ENCODE measurements at regions of chr19 and their contacts with region 1.

Region 1: GRCh38 chr19:9621156-9622037 is at the start of gene ZNF561:
- DNase-seq: peak; percentile 80
- H3K4me3 Mint-ChIP-seq: peak within 1 kb of the TSS; percentile 100
- H3K27ac Mint-ChIP-seq: peak within 1 kb of the TSS; percentile 99
- H3K4me1 Mint-ChIP-seq: peaks cover 28% of the 10 kb centered on the region
- H3K27me3 Mint-ChIP-seq: no peaks in the 10 kb centered on the region
- total RNA-seq, gene ZNF561: 33.2 and 36.7 TPM in 2 replicates

Region 2: GRCh38 chr19:9205501-9206113 is 415.8 kb before region 1 on chr19:
- intact Hi-C with region 1: loop called (anchors 10 kb)
- DNase-seq: peak; percentile 52
- H3K4me3 Mint-ChIP-seq: peak overlapping the region; percentile 37
- H3K27ac Mint-ChIP-seq: no peak overlapping the region
- H3K4me1 Mint-ChIP-seq: peaks cover 6% of the 10 kb centered on the region
- H3K27me3 Mint-ChIP-seq: no peaks in the 10 kb centered on the region

Region 3: GRCh38 chr19:9538183-9539058 is 83.0 kb before region 1 on chr19 and contains the start of gene ZNF426:
- intact Hi-C with region 1: loop called (anchors 5 kb)
- DNase-seq: peak; percentile 76
- H3K4me3 Mint-ChIP-seq: peak within 1 kb of the TSS; percentile 97
- H3K27ac Mint-ChIP-seq: peak within 1 kb of the TSS; percentile 98
- H3K4me1 Mint-ChIP-seq: peaks cover 5% of the 10 kb centered on the region
- H3K27me3 Mint-ChIP-seq: no peaks in the 10 kb centered on the region
- total RNA-seq, gene ZNF426: 10.2 and 10.3 TPM in 2 replicates

Region 4: GRCh38 chr19:9674663-9675357 is 53.4 kb after region 1 on chr19 and contains the start of gene ZNF562:
- intact Hi-C with region 1: loop called (anchors 2 kb)
- DNase-seq: peak; percentile 63
- H3K4me3 Mint-ChIP-seq: peak within 1 kb of the TSS; percentile 89
- H3K27ac Mint-ChIP-seq: peak within 1 kb of the TSS; percentile 95
- H3K4me1 Mint-ChIP-seq: peaks cover 21% of the 10 kb centered on the region
- H3K27me3 Mint-ChIP-seq: no peaks in the 10 kb centered on the region
- total RNA-seq, gene ZNF562: 13.2 and 13.8 TPM in 2 replicates

Region 5: DNA sequence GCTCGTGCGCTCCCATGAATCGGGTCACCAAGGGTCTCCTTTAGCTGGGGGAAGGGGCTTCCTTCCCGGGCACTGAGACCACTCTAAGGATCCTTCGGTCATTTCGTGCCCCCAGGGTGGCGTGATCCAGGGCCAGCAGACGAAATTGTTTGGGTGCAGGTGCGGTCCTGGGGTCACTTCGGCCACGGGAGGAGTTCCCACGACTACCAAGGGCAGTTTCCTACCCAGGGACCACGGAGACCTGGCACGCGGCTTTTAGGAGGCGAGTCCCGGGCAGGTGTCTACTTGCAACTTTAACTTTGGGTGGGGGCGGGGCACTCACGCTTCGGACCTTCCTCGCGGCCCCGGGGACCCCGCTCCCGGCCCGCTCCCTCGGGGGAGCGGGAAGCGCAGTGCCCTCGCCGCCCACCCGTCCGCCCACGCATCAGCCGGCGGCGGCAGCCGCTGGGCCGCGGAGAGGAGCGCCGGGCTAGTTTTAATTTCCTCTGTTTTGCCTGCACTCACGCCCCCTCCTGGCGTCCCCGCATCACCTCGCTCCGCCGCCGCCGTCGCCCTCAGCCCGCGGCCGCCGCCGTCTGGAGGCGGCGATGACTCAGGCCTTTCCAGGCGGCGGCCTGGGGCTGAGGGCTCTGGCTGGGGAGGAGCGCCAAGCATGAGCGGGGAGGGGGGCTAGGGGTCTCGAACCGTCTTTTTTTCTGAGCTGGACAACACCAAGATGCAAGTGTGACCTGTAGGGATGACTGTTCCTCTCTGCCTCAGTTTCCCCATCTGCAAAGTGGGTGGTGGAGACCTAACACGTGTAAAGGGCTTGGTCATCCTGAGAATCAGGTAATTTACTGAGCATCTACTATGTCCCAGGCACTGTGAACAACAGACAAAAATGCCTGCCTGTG is 293.2 kb after region 1 on chr19:
- intact Hi-C with region 1: loop called (anchors 10 kb)
- DNase-seq: peak; percentile 69
- H3K4me3 Mint-ChIP-seq: peak overlapping the region; percentile 52
- H3K27ac Mint-ChIP-seq: no peak overlapping the region
- H3K4me1 Mint-ChIP-seq: peaks cover 17% of the 10 kb centered on the region
- H3K27me3 Mint-ChIP-seq: peaks cover 21% of the 10 kb centered on the region